CD4-positive, alpha-beta memory T cell (primary cell): ENCODE measurements at regions of chr9 and their contacts with region 1.

Region 1: GRCh38 chr9:134067904-134068743 is at the start of gene BRD3:
- DNase-seq: peak; percentile 82 to 89 (median 85)
- H3K4me3 ChIP-seq: peak within 1 kb of the TSS; percentile 65 to 74
- H3K4me3 Mint-ChIP-seq: peak within 1 kb of the TSS; percentile 89 to 98 (median 91)
- H3K27ac ChIP-seq: peak within 1 kb of the TSS; percentile 78
- H3K27ac Mint-ChIP-seq: peak within 1 kb of the TSS; percentile 89 to 97 (median 94)
- H3K4me1 ChIP-seq: peaks cover 34% of the 10 kb centered on the region
- H3K4me1 Mint-ChIP-seq: peaks cover 18 to 46% (median 23%) of the 10 kb centered on the region in 4 donors
- H3K27me3 ChIP-seq: peaks cover 4% of the 10 kb centered on the region
- H3K27me3 Mint-ChIP-seq: peaks cover 11 to 14% of the 10 kb centered on the region in 2 donors
- total RNA-seq, gene BRD3: 40.8 to 48.5 TPM

Region 2: DNA sequence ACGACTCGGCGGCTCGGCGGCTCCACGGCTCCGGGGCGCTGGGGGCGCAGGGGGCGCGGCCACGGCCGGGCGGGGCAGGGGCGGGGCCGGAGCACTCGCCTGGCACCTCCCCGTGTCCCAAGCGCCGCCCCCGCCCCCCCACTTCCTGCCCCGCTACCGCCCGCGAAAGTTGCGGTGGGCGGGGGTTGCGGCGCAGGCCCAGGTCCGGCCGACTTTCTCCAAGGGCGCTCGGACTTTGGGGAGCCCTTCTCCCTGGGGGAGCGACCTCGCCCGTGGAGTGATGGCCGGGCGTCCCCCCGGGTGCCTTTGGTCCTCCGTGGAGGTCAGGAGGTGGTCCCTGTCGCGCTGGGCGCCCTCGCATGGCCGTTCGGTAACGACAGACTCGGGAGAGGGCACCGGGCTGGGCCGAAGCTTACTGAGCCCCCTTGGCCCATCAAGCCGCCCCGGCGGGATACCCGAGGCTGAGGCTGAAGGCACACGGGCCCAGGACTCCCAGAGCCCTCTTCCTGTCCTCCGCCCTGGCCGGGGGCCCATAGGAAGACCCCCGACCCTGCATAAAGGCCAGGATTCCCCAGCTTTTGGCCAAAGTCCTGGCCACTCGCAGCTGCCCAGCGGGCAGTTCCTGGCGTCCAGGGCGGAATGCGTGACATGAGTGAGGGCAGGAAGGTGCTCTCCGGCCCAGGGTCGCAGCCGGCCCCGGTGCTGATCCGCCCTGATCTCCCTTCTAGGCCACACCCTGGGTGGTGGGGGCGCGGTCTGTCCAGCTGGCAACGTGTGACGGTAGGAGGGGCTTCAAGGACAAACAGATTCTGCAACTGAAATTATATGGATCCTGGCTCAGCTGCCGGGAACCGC is 75.1 kb before region 1 on chr9:
- CTCF ChIA-PET with region 1: no interaction called
- POLR2A ChIA-PET with region 1: no interaction called
- intact Hi-C with region 1: loop called (anchors 1 kb)
- DNase-seq: peak; percentile 58 to 67 (median 60)
- H3K4me3 ChIP-seq: peak overlapping the region; percentile 47 to 58
- H3K4me3 Mint-ChIP-seq: peak overlapping the region; percentile 73 to 83 (median 80)
- H3K27ac ChIP-seq: no peak overlapping the region
- H3K27ac Mint-ChIP-seq: peak overlapping the region in 1 of 7 donors; percentile 35
- H3K4me1 ChIP-seq: peaks cover 16% of the 10 kb centered on the region
- H3K4me1 Mint-ChIP-seq: peaks cover 1 to 16% (median 5%) of the 10 kb centered on the region in 4 donors
- H3K27me3 ChIP-seq: no peaks in the 10 kb centered on the region
- H3K27me3 Mint-ChIP-seq: peaks cover 0 to 6% of the 10 kb centered on the region in 2 donors

Region 3: GRCh38 chr9:134055981-134056461 is 12.1 kb before region 1 on chr9:
- CTCF ChIA-PET with region 1: no interaction called
- POLR2A ChIA-PET with region 1: no interaction called
- intact Hi-C with region 1: no loop called
- DNase-seq: no peak
- H3K4me3 ChIP-seq: no peak overlapping the region
- H3K4me3 Mint-ChIP-seq: no peak overlapping the region
- H3K27ac ChIP-seq: no peak overlapping the region
- H3K27ac Mint-ChIP-seq: peak overlapping the region in 1 of 7 donors; percentile 52
- H3K4me1 ChIP-seq: peaks cover 18% of the 10 kb centered on the region
- H3K4me1 Mint-ChIP-seq: peaks cover 11 to 38% (median 30%) of the 10 kb centered on the region in 4 donors
- H3K27me3 ChIP-seq: no peaks in the 10 kb centered on the region
- H3K27me3 Mint-ChIP-seq: no peaks in the 10 kb centered on the region

Region 4: GRCh38 chr9:134099123-134099787 is 31.1 kb after region 1 on chr9:
- CTCF ChIA-PET with region 1: no interaction called
- POLR2A ChIA-PET with region 1: no interaction called
- intact Hi-C with region 1: loop called (anchors 1 kb)
- DNase-seq: peak; percentile 51 to 62 (median 55)
- H3K4me3 ChIP-seq: no peak overlapping the region
- H3K4me3 Mint-ChIP-seq: no peak overlapping the region
- H3K27ac ChIP-seq: no peak overlapping the region
- H3K27ac Mint-ChIP-seq: no peak overlapping the region
- H3K4me1 ChIP-seq: no peaks in the 10 kb centered on the region
- H3K4me1 Mint-ChIP-seq: peaks cover 0 to 3% (median 0%) of the 10 kb centered on the region in 4 donors
- H3K27me3 ChIP-seq: no peaks in the 10 kb centered on the region
- H3K27me3 Mint-ChIP-seq: peaks cover 16 to 18% of the 10 kb centered on the region in 2 donors

Region 5: DNA sequence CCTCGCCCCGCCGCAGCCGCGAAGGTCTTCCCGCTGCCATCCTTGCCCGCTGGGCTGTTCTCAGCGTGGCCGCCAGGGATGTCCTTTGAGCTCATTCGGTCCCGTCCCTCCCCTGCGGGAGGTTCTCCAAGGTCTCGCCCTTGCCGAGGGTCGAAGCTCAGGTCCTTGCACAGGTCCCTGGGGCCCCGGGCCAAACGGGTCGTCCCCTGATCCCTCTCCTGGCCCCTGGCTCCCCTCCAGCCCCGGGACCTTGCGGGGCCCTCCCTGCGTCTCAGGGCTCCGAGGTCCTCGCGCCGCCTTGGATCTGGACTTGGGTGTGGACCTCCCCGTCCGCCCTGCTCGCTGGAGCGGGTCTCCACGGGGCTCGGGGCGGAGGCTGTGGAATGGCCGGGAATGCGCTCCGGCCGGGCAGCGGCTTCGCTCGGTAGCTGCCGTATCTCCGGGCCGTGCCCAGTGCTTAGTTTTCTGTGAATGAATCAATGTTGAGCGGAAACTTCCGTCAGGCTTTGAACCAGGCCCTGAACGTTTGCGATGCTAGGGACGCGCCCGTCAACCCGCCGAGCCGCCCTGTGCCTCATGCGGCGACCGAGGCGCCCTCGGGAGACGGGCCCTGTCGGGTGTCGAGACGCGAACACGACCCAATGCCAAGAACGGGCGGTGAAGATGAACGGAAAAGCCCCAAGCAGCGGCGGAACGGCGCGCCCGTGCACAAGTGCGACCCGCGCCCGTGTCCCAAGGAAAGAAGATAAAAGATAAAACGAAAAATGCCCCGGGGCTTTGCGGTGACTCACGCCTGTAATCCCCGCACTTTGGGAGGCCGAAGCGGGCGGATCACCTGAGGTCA is 95.5 kb after region 1 on chr9:
- CTCF ChIA-PET with region 1: no interaction called
- POLR2A ChIA-PET with region 1: interaction called, 21 read pairs
- intact Hi-C with region 1: no loop called
- DNase-seq: peak; percentile 71 to 82 (median 74)
- H3K4me3 ChIP-seq: peak overlapping the region in 1 of 2 donors; percentile 29
- H3K4me3 Mint-ChIP-seq: no peak overlapping the region
- H3K27ac ChIP-seq: no peak overlapping the region
- H3K27ac Mint-ChIP-seq: peak overlapping the region in 2 of 7 donors; percentile 32 to 75
- H3K4me1 ChIP-seq: peaks cover 9% of the 10 kb centered on the region
- H3K4me1 Mint-ChIP-seq: peaks cover 8 to 28% (median 12%) of the 10 kb centered on the region in 4 donors
- H3K27me3 ChIP-seq: no peaks in the 10 kb centered on the region
- H3K27me3 Mint-ChIP-seq: peaks cover 0 to 2% of the 10 kb centered on the region in 2 donors

Region 6: GRCh38 chr9:134399435-134400056 is 331.4 kb after region 1 on chr9:
- CTCF ChIA-PET with region 1: no interaction called
- POLR2A ChIA-PET with region 1: no interaction called
- intact Hi-C with region 1: loop called (anchors 10 kb)
- DNase-seq: no peak
- H3K4me3 ChIP-seq: no peak overlapping the region
- H3K4me3 Mint-ChIP-seq: peak overlapping the region in 1 of 8 donors; percentile 10
- H3K27ac ChIP-seq: no peak overlapping the region
- H3K27ac Mint-ChIP-seq: peak overlapping the region in 4 of 7 donors; percentile 9 to 87 (median 54)
- H3K4me1 ChIP-seq: peaks cover 57% of the 10 kb centered on the region
- H3K4me1 Mint-ChIP-seq: peaks cover 25 to 62% (median 38%) of the 10 kb centered on the region in 4 donors
- H3K27me3 ChIP-seq: no peaks in the 10 kb centered on the region
- H3K27me3 Mint-ChIP-seq: no peaks in the 10 kb centered on the region